ENCODE measurements at regions of chr3 and their contacts with region 1.

Region 1: GRCh38 chr3:53347261-53348064 is at the start of gene DCP1A:
- DNase-seq: peak; percentile 91 to 98 (median 94)
- ATAC-seq: peak; percentile 95
- H3K4me3 ChIP-seq: peak within 1 kb of the TSS; percentile 95 to 99
- H3K4me3 Mint-ChIP-seq: peak within 1 kb of the TSS; percentile 99
- H3K27ac ChIP-seq: peak within 1 kb of the TSS; percentile 91 to 95
- H3K27ac Mint-ChIP-seq: peak within 1 kb of the TSS; percentile 98
- H3K4me1 ChIP-seq: peaks cover 28% of the 10 kb centered on the region
- H3K4me1 Mint-ChIP-seq: peaks cover 39% of the 10 kb centered on the region
- H3K27me3 ChIP-seq: no peaks in the 10 kb centered on the region
- H3K27me3 Mint-ChIP-seq: no peaks in the 10 kb centered on the region
- CTCF ChIP-seq: no peak
- total RNA-seq, gene DCP1A: 71.8 to 80.4 TPM

Region 2: GRCh38 chr3:52455283-52456168 is 891.9 kb before region 1 on chr3 and contains the start of gene NISCH:
- CTCF ChIA-PET with region 1: no interaction called
- POLR2A ChIA-PET with region 1: no interaction called
- intact Hi-C with region 1: loop called in 1 of 2 experiments (anchors 10 kb)
- DNase-seq: peak; percentile 92 to 99 (median 96)
- ATAC-seq: peak; percentile 94
- H3K4me3 ChIP-seq: peak within 1 kb of the TSS; percentile 86 to 97
- H3K4me3 Mint-ChIP-seq: peak within 1 kb of the TSS; percentile 91
- H3K27ac ChIP-seq: peak within 1 kb of the TSS; percentile 90 to 97
- H3K27ac Mint-ChIP-seq: peak within 1 kb of the TSS; percentile 99
- H3K4me1 ChIP-seq: peaks cover 26% of the 10 kb centered on the region
- H3K4me1 Mint-ChIP-seq: peaks cover 43% of the 10 kb centered on the region
- H3K27me3 ChIP-seq: no peaks in the 10 kb centered on the region
- H3K27me3 Mint-ChIP-seq: no peaks in the 10 kb centered on the region
- CTCF ChIP-seq: no peak
- total RNA-seq, gene NISCH: 150 to 163 TPM

Region 3: GRCh38 chr3:53130179-53131061 is 217.0 kb before region 1 on chr3 and contains the start of gene RFT1:
- CTCF ChIA-PET with region 1: no interaction called
- POLR2A ChIA-PET with region 1: no interaction called
- intact Hi-C with region 1: loop called (anchors 1 kb)
- DNase-seq: peak; percentile 95 to 99 (median 99)
- ATAC-seq: peak; percentile 92
- H3K4me3 ChIP-seq: peak within 1 kb of the TSS; percentile 90 to 93
- H3K4me3 Mint-ChIP-seq: peak within 1 kb of the TSS; percentile 91
- H3K27ac ChIP-seq: peak within 1 kb of the TSS; percentile 89 to 98
- H3K27ac Mint-ChIP-seq: peak within 1 kb of the TSS; percentile 99
- H3K4me1 ChIP-seq: peaks cover 21% of the 10 kb centered on the region
- H3K4me1 Mint-ChIP-seq: peaks cover 37% of the 10 kb centered on the region
- H3K27me3 ChIP-seq: no peaks in the 10 kb centered on the region
- H3K27me3 Mint-ChIP-seq: no peaks in the 10 kb centered on the region
- CTCF ChIP-seq: no peak
- total RNA-seq, gene RFT1: 6.6 to 7.0 TPM

Region 4: GRCh38 chr3:53274938-53275605 is 72.4 kb before region 1 on chr3:
- CTCF ChIA-PET with region 1: no interaction called
- POLR2A ChIA-PET with region 1: interaction called, 13 read pairs
- intact Hi-C with region 1: no loop called
- DNase-seq: peak in 8 of 9 experiments; percentile 21 to 65 (median 40)
- ATAC-seq: peak; percentile 94
- H3K4me3 ChIP-seq: no peak overlapping the region
- H3K4me3 Mint-ChIP-seq: peak overlapping the region; percentile 10
- H3K27ac ChIP-seq: peak overlapping the region; percentile 29
- H3K27ac Mint-ChIP-seq: peak overlapping the region; percentile 92
- H3K4me1 ChIP-seq: peaks cover 11% of the 10 kb centered on the region
- H3K4me1 Mint-ChIP-seq: peaks cover 11% of the 10 kb centered on the region
- H3K27me3 ChIP-seq: no peaks in the 10 kb centered on the region
- H3K27me3 Mint-ChIP-seq: no peaks in the 10 kb centered on the region
- CTCF ChIP-seq: no peak

Region 5: GRCh38 chr3:53426918-53427317 is 79.5 kb after region 1 on chr3:
- CTCF ChIA-PET with region 1: no interaction called
- POLR2A ChIA-PET with region 1: no interaction called
- intact Hi-C with region 1: no loop called
- DNase-seq: no peak
- ATAC-seq: no peak
- H3K4me3 ChIP-seq: no peak overlapping the region
- H3K4me3 Mint-ChIP-seq: no peak overlapping the region
- H3K27ac ChIP-seq: no peak overlapping the region
- H3K27ac Mint-ChIP-seq: no peak overlapping the region
- H3K4me1 ChIP-seq: no peaks in the 10 kb centered on the region
- H3K4me1 Mint-ChIP-seq: no peaks in the 10 kb centered on the region
- H3K27me3 ChIP-seq: no peaks in the 10 kb centered on the region
- H3K27me3 Mint-ChIP-seq: peaks cover 17% of the 10 kb centered on the region
- CTCF ChIP-seq: no peak

Region 6: GRCh38 chr3:53881691-53882593 is 534.5 kb after region 1 on chr3 and contains the start of gene ACTR8:
- CTCF ChIA-PET with region 1: no interaction called
- POLR2A ChIA-PET with region 1: no interaction called
- intact Hi-C with region 1: loop called in 1 of 2 experiments (anchors 2 kb)
- DNase-seq: peak; percentile 72 to 90 (median 85)
- ATAC-seq: peak; percentile 86
- H3K4me3 ChIP-seq: peak within 1 kb of the TSS; percentile 79 to 88
- H3K4me3 Mint-ChIP-seq: peak within 1 kb of the TSS; percentile 97
- H3K27ac ChIP-seq: peak within 1 kb of the TSS; percentile 76 to 81
- H3K27ac Mint-ChIP-seq: peak within 1 kb of the TSS; percentile 97
- H3K4me1 ChIP-seq: peaks cover 28% of the 10 kb centered on the region
- H3K4me1 Mint-ChIP-seq: peaks cover 35% of the 10 kb centered on the region
- H3K27me3 ChIP-seq: no peaks in the 10 kb centered on the region
- H3K27me3 Mint-ChIP-seq: no peaks in the 10 kb centered on the region
- CTCF ChIP-seq: no peak
- total RNA-seq, gene ACTR8: 20.3 to 23.7 TPM